Activated CD8-positive, alpha-beta T cell treated with anti-CD3 and anti-CD28 coated beads, Interleukin-2, amount 10 ng/mL, durations not matched to agents 7 days and 5 days (primary cell): ENCODE measurements at regions of chr17 and their contacts with region 1.

Region 1: DNA sequence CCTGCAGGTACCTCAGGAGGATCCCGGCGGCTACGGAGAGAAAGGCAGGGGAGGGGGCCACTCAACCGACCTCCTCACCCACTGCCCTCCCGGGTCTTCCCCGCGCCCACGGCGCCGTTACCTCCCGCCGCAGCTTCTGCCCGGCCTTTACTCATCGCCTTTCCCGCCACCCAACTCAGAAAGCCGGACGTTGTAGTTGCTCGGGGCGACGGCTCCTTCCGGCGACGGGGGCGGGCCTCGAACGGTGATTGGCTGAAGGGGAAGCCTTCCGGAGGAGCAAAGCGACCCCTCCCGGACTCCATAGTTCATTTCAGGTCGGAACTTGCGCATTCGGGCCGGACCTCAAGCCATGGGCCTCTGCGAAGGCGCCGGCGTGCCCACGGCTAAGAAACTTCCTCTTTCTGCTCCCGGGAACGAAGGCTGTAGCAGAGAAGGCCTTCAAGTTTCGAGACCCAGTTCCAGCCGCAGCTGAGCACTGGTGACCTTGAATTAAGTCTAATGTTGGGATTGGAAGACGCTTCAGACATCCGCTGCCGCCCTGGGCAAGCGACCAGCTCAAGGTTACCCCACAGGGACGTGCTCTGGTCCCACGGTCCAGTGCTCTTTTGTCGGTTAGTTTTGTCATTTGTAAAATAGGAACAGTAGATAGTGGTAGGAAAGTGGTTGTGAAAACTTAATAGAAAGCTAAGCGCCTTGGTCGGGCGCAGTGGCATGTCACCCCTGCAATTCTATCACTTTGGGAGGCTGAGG is at the start of gene PSMC3IP:
- DNase-seq: peak; percentile 97
- ATAC-seq: peak; percentile 91
- H3K4me3 Mint-ChIP-seq: peak within 1 kb of the TSS; percentile 98
- H3K27ac Mint-ChIP-seq: peak within 1 kb of the TSS; percentile 96
- H3K4me1 Mint-ChIP-seq: peaks cover 49% of the 10 kb centered on the region
- H3K27me3 Mint-ChIP-seq: no peaks in the 10 kb centered on the region
- total RNA-seq, gene PSMC3IP: 19.2 to 21.8 TPM

Region 2: DNA sequence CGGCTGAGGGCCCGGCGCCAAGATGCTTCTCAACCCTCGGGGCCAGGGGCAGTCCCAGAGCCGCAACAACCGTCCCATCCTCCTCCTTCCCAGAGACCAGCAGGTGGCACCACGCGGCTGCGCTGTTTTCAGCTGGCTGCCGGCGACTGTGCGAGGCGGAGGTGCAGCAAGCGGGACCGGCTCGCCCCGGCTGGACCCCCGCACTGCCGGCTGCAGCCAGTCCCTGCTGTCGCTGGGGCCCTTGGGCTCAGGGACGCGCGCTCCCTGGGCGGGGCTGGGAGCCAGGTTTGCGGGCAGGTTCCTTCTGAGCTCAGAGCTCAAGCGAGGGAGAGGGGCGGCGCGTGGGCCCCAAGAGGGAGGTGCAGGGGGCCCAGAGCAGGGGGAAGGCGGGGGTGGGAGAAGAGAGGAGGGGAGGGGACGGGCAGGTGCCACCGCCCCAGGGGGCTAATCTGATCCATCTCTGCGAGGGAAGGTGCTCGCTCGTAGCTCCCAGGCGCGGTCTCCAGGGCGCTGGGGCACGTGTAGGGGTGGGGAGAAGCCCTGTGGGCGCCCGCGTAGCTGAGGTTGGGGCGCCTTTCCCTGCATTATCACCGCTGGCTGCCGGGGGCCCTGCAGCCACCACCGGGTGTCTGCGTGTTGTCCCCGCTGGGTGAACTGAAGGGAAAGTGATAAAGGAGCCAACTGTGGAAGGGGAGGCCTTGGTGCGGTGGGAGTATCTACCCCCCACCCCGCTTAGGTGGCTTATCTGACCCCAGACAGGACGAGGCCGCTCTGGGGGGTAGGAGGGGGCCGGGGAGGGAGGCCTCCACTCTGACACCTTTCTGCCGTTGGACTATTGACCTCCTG is 265.2 kb before region 1 on chr17:
- CTCF ChIA-PET with region 1: no interaction called
- POLR2A ChIA-PET with region 1: no interaction called
- DNase-seq: peak; percentile 85
- ATAC-seq: peak; percentile 77
- H3K4me3 Mint-ChIP-seq: peak overlapping the region; percentile 39
- H3K27ac Mint-ChIP-seq: peak overlapping the region; percentile 67
- H3K4me1 Mint-ChIP-seq: peaks cover 60% of the 10 kb centered on the region
- H3K27me3 Mint-ChIP-seq: no peaks in the 10 kb centered on the region

Region 3: GRCh38 chr17:42484304-42484703 is 93.4 kb before region 1 on chr17:
- CTCF ChIA-PET with region 1: no interaction called
- POLR2A ChIA-PET with region 1: no interaction called
- DNase-seq: peak; percentile 89
- ATAC-seq: peak; percentile 97
- H3K4me3 Mint-ChIP-seq: peak overlapping the region; percentile 39
- H3K27ac Mint-ChIP-seq: peak overlapping the region; percentile 43
- H3K4me1 Mint-ChIP-seq: peaks cover 36% of the 10 kb centered on the region
- H3K27me3 Mint-ChIP-seq: peaks cover 12% of the 10 kb centered on the region

Region 4: DNA sequence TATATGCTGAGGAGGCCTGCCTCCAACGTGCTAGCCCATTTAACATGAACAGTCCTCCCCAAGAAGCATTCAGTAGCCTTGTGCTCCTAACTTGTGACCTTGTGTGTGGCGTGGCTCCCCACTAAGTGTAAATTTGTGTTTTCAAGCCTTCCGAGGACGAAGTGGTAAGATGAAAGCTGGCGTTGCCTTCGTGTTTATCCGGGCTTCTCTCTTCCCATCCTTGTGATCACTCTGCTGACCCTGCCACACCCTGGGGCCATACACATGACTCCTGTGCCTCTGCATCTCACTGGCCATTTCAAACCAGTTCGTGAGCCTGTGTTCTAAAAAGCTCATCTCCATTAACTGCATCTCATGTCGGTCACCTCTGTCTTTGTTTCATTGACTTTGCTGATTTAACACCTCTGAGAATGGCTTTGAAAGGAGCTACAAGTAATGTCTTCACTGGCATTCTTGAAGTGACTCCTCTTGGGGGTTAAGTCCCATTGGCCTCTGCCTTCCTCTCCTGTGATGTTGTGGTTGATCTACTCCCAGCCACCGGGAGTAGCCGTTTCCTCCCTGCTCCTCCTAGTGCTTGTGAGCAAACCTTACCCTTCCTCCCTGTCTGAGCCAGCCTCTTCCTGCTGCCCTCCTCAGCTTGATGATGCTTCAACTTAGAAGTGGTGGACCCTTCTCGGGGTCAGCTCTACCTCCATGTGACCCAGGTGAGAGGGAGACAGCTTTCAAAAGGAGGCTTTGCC is 69.1 kb before region 1 on chr17:
- CTCF ChIA-PET with region 1: no interaction called
- POLR2A ChIA-PET with region 1: no interaction called
- DNase-seq: no peak
- ATAC-seq: no peak
- H3K4me3 Mint-ChIP-seq: no peak overlapping the region
- H3K27ac Mint-ChIP-seq: peak overlapping the region; percentile 13
- H3K4me1 Mint-ChIP-seq: peaks cover 10% of the 10 kb centered on the region
- H3K27me3 Mint-ChIP-seq: peaks cover 12% of the 10 kb centered on the region

Region 5: DNA sequence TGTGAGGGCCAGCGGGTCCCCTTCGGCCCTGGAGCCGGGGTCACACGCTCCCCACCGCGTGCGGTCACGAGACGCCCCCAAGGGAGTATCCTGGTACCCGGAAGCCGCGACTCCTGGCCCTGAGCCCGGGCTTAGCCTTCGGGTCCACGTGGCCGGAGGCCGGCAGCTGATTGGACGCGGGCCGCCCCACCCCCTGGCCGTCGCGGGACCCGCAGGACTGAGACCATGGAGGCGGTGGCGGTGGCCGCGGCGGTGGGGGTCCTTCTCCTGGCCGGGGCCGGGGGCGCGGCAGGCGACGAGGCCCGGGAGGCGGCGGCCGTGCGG is 41.7 kb before region 1 on chr17 and contains the start of gene NAGLU:
- CTCF ChIA-PET with region 1: interaction called, 23 read pairs
- POLR2A ChIA-PET with region 1: no interaction called
- DNase-seq: peak; percentile 88
- ATAC-seq: peak; percentile 91
- H3K4me3 Mint-ChIP-seq: peak within 1 kb of the TSS; percentile 87
- H3K27ac Mint-ChIP-seq: peak within 1 kb of the TSS; percentile 87
- H3K4me1 Mint-ChIP-seq: peaks cover 59% of the 10 kb centered on the region
- H3K27me3 Mint-ChIP-seq: peaks cover 7% of the 10 kb centered on the region
- total RNA-seq, gene NAGLU: 19.3 to 20.5 TPM

Region 6: GRCh38 chr17:42566883-42567573 is 10.7 kb before region 1 on chr17 and contains the start of gene MLX:
- CTCF ChIA-PET with region 1: interaction called, 57 read pairs
- POLR2A ChIA-PET with region 1: interaction called, 47 read pairs
- DNase-seq: peak; percentile 93
- ATAC-seq: peak; percentile 75
- H3K4me3 Mint-ChIP-seq: peak within 1 kb of the TSS; percentile 85
- H3K27ac Mint-ChIP-seq: peak within 1 kb of the TSS; percentile 98
- H3K4me1 Mint-ChIP-seq: peaks cover 64% of the 10 kb centered on the region
- H3K27me3 Mint-ChIP-seq: no peaks in the 10 kb centered on the region
- total RNA-seq, gene MLX: 65.8 to 65.9 TPM

Region 7: DNA sequence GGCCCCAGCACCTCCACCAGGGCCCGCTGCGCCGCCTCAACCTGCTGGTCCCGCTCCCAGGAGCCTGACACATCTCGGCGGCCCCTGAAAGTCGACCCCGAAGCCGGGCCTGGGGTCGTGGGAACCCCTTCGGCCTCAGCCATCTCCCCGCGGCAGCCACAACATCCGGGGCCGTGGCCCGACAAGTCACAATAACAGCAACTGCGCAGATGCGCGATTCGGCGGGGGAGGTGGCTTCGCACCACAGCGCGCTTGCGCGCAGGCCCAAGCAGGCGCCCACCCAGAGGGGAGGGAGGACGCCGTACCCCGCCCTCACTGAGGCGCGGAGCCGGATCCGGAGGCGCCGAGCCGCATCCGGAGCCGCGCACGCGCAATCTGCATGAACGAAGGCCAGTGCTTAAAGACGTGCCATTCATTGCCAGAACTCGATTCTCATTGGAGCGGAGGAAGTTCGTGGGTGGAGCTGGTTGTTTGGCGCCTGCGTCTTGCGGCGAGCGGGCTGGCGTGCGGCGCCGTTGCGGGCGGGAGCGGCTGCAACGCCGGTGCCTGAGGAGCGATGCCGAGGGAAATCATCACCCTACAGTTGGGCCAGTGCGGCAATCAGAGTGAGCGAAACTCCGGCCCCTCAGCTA is 31.6 kb after region 1 on chr17 and contains the starts of genes RETREG3 and TUBG1:
- CTCF ChIA-PET with region 1: interaction called, 72 read pairs
- POLR2A ChIA-PET with region 1: interaction called, 17 read pairs
- DNase-seq: peak; percentile 99
- ATAC-seq: peak; percentile 92
- H3K4me3 Mint-ChIP-seq: peak within 1 kb of the TSS; percentile 100
- H3K27ac Mint-ChIP-seq: peak within 1 kb of the TSS; percentile 97
- H3K4me1 Mint-ChIP-seq: peaks cover 42% of the 10 kb centered on the region
- H3K27me3 Mint-ChIP-seq: no peaks in the 10 kb centered on the region
- total RNA-seq, gene RETREG3: 53.6 to 54.7 TPM
- total RNA-seq, gene TUBG1: 82.3 to 83.4 TPM

Region 8: GRCh38 chr17:42632949-42633444 is 55.3 kb after region 1 on chr17:
- CTCF ChIA-PET with region 1: no interaction called
- POLR2A ChIA-PET with region 1: no interaction called
- DNase-seq: no peak
- ATAC-seq: no peak
- H3K4me3 Mint-ChIP-seq: no peak overlapping the region
- H3K27ac Mint-ChIP-seq: no peak overlapping the region
- H3K4me1 Mint-ChIP-seq: no peaks in the 10 kb centered on the region
- H3K27me3 Mint-ChIP-seq: peaks cover 3% of the 10 kb centered on the region

Region 9: GRCh38 chr17:42709561-42709960 is 131.9 kb after region 1 on chr17:
- CTCF ChIA-PET with region 1: interaction called, 12 read pairs
- POLR2A ChIA-PET with region 1: no interaction called
- DNase-seq: no peak
- ATAC-seq: no peak
- H3K4me3 Mint-ChIP-seq: no peak overlapping the region
- H3K27ac Mint-ChIP-seq: no peak overlapping the region
- H3K4me1 Mint-ChIP-seq: peaks cover 22% of the 10 kb centered on the region
- H3K27me3 Mint-ChIP-seq: no peaks in the 10 kb centered on the region

Region 10: GRCh38 chr17:42773290-42774035 is 195.8 kb after region 1 on chr17 and contains the start of gene VPS25:
- CTCF ChIA-PET with region 1: interaction called, 23 read pairs
- POLR2A ChIA-PET with region 1: interaction called, 3 read pairs
- DNase-seq: peak; percentile 82
- ATAC-seq: peak; percentile 97
- H3K4me3 Mint-ChIP-seq: peak within 1 kb of the TSS; percentile 99
- H3K27ac Mint-ChIP-seq: peak within 1 kb of the TSS; percentile 99
- H3K4me1 Mint-ChIP-seq: peaks cover 34% of the 10 kb centered on the region
- H3K27me3 Mint-ChIP-seq: peaks cover 2% of the 10 kb centered on the region
- total RNA-seq, gene VPS25: 67.8 to 70.5 TPM